A549 (cell line): ENCODE measurements at regions of chr17 and their contacts with region 1.

Region 1: GRCh38 chr17:28763804-28764266 is 20.0 kb downstream of the TRAF4 start:
- DNase-seq: peak; percentile 78 to 81
- ATAC-seq: peak; percentile 51 to 69; a peak in 5 of 6 replicates
- H3K4me3 ChIP-seq: no peak overlapping the region
- H3K27ac ChIP-seq: no peak overlapping the region
- H3K4me1 ChIP-seq: peaks cover 15% of the 10 kb centered on the region
- CTCF ChIP-seq: peak; percentile 97
- EP300 ChIP-seq: no peak
- POLR2A ChIP-seq: no peak
- RAD21 ChIP-seq: peak; percentile 87 to 89

Region 2: GRCh38 chr17:28734813-28735722 is 28.8 kb before region 1 on chr17:
- CTCF ChIA-PET with region 1: interaction called, 977 read pairs
- POLR2A ChIA-PET with region 1: no interaction called
- DNase-seq: peak in 1 of 2 experiments; percentile 56
- ATAC-seq: peak; percentile 73 to 76
- H3K4me3 ChIP-seq: no peak overlapping the region
- H3K27ac ChIP-seq: peak overlapping the region; percentile 2 to 73; a peak in 3 of 6 replicates
- H3K4me1 ChIP-seq: peaks cover 9% of the 10 kb centered on the region
- CTCF ChIP-seq: no peak
- EP300 ChIP-seq: no peak
- POLR2A ChIP-seq: no peak
- RAD21 ChIP-seq: no peak

Region 3: GRCh38 chr17:28792877-28793661 is 29.2 kb after region 1 on chr17:
- CTCF ChIA-PET with region 1: interaction called, 107 read pairs
- POLR2A ChIA-PET with region 1: no interaction called
- DNase-seq: peak in 1 of 2 experiments; percentile 27
- ATAC-seq: peak; percentile 56 to 82; a peak in 4 of 6 replicates
- H3K4me3 ChIP-seq: no peak overlapping the region
- H3K27ac ChIP-seq: no peak overlapping the region
- H3K4me1 ChIP-seq: no peaks in the 10 kb centered on the region
- CTCF ChIP-seq: no peak
- EP300 ChIP-seq: no peak
- POLR2A ChIP-seq: no peak
- RAD21 ChIP-seq: no peak

Region 4: GRCh38 chr17:28842282-28843012 is 78.6 kb after region 1 on chr17 and contains the start of gene FAM222B:
- CTCF ChIA-PET with region 1: interaction called, 58 read pairs
- POLR2A ChIA-PET with region 1: interaction called, 7 read pairs
- DNase-seq: peak; percentile 87 to 100
- ATAC-seq: peak; percentile 99 to 100
- H3K4me3 ChIP-seq: peak within 1 kb of the TSS; percentile 82
- H3K27ac ChIP-seq: peak within 1 kb of the TSS; percentile 82 to 92
- H3K4me1 ChIP-seq: peaks cover 11% of the 10 kb centered on the region; the same call in 1 of the 3 replicates
- CTCF ChIP-seq: no peak
- EP300 ChIP-seq: no peak
- POLR2A ChIP-seq: peak; percentile 79
- RAD21 ChIP-seq: no peak; a peak in 1 of 5 replicates
- polyA plus RNA-seq, gene FAM222B: 10.7 and 15.3 TPM in 2 replicates

Region 5: DNA sequence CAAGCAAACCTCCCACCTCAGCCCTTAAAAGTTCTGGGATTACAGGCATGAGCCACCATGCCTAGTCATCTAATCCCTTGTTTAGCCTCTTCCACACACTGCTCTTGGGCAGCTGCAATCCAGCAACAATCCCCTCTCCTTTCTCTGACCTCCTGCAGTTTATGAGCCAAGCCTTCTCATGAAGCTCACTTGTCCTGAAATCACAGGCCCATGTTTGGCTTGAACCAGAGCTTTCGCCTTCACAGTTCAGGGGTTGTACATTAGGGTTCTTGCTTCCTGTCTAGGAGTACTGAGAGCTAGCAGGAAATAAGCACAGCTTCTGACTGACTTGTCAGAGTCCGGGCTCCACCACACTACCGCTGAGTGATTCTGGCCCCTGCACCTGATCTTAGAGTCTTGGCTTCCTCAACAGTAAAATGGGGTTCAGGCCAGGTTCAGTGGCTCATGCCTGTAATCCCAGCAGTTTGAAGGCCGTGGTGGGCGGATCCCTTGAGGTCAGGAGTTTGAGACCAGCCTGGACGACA is 107.3 kb after region 1 on chr17:
- CTCF ChIA-PET with region 1: interaction called, 25 read pairs
- POLR2A ChIA-PET with region 1: no interaction called
- DNase-seq: no peak
- ATAC-seq: peak in 1 of 2 experiments; percentile 12; a peak in 1 of 6 replicates
- H3K4me3 ChIP-seq: no peak overlapping the region
- H3K27ac ChIP-seq: no peak overlapping the region
- H3K4me1 ChIP-seq: no peaks in the 10 kb centered on the region
- CTCF ChIP-seq: no peak
- EP300 ChIP-seq: no peak
- POLR2A ChIP-seq: no peak
- RAD21 ChIP-seq: no peak

Region 6: DNA sequence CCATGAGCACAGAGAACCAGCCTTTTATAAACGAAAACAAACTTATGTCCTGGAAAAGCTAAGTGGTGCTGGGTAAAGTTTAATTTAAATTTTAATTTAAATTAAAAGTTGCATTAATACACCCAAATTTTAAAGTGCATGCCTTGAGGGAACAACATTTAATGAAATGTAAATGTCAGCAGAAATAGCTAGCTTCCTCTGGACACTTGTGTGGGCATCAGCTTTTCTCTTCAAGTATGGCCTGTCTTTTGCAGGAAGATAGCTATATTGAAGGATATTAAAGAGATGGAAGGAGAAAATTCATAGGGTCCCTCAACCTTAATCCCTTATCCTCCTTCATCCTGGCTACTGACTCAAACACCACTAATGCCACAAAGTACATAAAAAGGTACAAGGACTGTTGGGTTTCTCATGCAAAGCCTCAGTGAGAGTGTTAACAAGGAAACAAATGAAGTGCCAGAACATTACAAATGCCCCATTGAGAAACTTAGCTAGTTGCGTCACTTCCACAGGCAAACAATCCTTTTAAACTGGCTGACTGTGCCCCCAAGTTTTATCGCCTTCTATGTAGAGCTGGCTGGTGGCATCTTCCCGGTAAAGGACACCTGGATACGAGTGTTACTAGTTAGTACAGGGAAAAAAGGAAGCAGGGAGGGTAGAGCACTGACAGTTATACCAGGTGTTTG is 173.4 kb after region 1 on chr17:
- CTCF ChIA-PET with region 1: interaction called, 15 read pairs
- POLR2A ChIA-PET with region 1: no interaction called
- DNase-seq: no peak
- ATAC-seq: no peak
- H3K4me3 ChIP-seq: no peak overlapping the region
- H3K27ac ChIP-seq: no peak overlapping the region
- H3K4me1 ChIP-seq: peaks cover 18% of the 10 kb centered on the region
- CTCF ChIP-seq: no peak
- EP300 ChIP-seq: no peak
- POLR2A ChIP-seq: no peak
- RAD21 ChIP-seq: no peak